ENCODE measurements at regions of chr1 and their contacts with region 1.

Region 1: DNA sequence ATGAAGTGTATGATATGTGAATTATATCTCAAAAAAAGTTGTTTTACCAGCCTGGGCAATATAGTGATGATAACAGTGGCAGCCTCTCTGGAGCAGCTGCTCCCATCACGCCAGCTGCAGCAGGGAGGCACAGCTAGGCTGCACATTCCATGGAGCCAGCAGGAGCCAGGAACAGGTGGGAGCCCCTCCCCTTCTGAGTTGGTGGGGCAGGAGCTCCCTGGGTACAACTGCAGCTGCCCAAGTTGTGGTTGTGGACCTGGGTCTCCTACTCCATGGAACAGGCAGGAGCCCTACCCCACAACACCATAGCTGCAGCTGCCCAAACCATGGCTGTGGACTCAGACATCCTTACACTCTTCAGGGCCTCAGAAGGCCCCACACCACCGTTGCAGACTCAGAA is 21.7 kb upstream of the FNBP1L start:
- DNase-seq: no peak
- H3K4me3 ChIP-seq: no peak overlapping the region
- H3K27ac ChIP-seq: no peak overlapping the region
- H3K4me1 ChIP-seq: no peaks in the 10 kb centered on the region
- H3K27me3 ChIP-seq: no peaks in the 10 kb centered on the region
- CTCF ChIP-seq: no peak

Region 2: DNA sequence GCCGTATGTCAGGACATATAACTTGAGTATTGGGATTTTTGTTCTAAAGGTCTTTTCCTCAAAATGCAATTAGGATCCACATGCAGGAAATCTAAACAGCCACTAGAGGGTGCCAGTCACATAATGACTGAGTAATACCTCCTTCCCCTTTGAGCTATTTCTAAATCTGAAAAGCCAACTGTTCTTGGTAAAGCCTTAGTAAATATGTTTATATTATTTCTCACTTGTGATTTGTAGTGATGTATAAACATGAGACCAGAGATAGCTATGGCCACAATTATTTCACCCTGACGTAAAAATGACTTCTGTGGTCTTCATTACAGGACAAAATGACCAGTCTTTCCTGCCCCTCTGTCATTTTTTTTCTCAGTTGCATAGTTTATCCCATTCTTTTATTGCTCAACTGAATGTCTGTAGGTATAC is 121.5 kb before region 1 on chr1:
- intact Hi-C with region 1: loop called (anchors 10 kb)
- DNase-seq: no peak
- H3K4me3 ChIP-seq: no peak overlapping the region
- H3K27ac ChIP-seq: no peak overlapping the region
- H3K4me1 ChIP-seq: peaks cover 6% of the 10 kb centered on the region
- H3K27me3 ChIP-seq: no peaks in the 10 kb centered on the region
- CTCF ChIP-seq: peak; percentile 93

Region 3: GRCh38 chr1:93349231-93350135 is 76.7 kb before region 1 on chr1:
- intact Hi-C with region 1: no loop called
- DNase-seq: no peak
- H3K4me3 ChIP-seq: peak overlapping the region; percentile 93
- H3K27ac ChIP-seq: no peak overlapping the region
- H3K4me1 ChIP-seq: peaks cover 90% of the 10 kb centered on the region
- H3K27me3 ChIP-seq: no peaks in the 10 kb centered on the region
- CTCF ChIP-seq: no peak

Region 4: GRCh38 chr1:93579891-93580290 is 153.7 kb after region 1 on chr1:
- intact Hi-C with region 1: no loop called
- DNase-seq: peak; percentile 52
- H3K4me3 ChIP-seq: no peak overlapping the region
- H3K27ac ChIP-seq: peak overlapping the region; percentile 65
- H3K4me1 ChIP-seq: peaks cover 75% of the 10 kb centered on the region
- H3K27me3 ChIP-seq: no peaks in the 10 kb centered on the region
- CTCF ChIP-seq: no peak

Measured in left ventricle myocardium inferior (tissue), 1 donor.